ENCODE measurements at regions of chr2 and their contacts with region 1.

Region 1: DNA sequence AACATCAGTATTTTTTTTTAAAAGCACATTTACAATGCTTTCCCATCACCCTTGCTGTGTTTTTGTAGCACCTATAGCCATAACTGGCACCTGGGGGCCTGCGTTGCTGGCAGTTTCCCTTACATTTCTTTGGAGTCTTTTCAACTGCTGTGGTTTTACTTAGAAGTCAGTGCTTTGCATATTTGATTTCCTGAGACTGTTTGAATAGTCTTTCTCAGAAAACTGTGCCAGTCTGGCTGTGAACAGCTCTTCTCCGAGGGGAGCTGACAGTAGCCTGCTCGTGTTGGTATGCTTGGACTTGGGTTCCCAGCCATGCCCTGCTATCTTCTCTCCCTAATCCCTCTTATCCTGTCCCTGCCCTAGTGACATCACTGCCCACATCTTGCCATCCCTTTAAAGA is 81.5 kb downstream of the DPP4 start:
- DNase-seq: peak; percentile 79
- H3K4me3 Mint-ChIP-seq: peak overlapping the region; percentile 78
- H3K27ac Mint-ChIP-seq: peak overlapping the region; percentile 96
- H3K4me1 Mint-ChIP-seq: peaks cover 77% of the 10 kb centered on the region
- H3K27me3 Mint-ChIP-seq: no peaks in the 10 kb centered on the region

Region 2: GRCh38 chr2:161592713-161593112 is 399.8 kb before region 1 on chr2:
- CTCF ChIA-PET with region 1: no interaction called
- POLR2A ChIA-PET with region 1: no interaction called
- DNase-seq: no peak
- H3K4me3 Mint-ChIP-seq: no peak overlapping the region
- H3K27ac Mint-ChIP-seq: no peak overlapping the region
- H3K4me1 Mint-ChIP-seq: peaks cover 19% of the 10 kb centered on the region
- H3K27me3 Mint-ChIP-seq: peaks cover 58% of the 10 kb centered on the region

Region 3: DNA sequence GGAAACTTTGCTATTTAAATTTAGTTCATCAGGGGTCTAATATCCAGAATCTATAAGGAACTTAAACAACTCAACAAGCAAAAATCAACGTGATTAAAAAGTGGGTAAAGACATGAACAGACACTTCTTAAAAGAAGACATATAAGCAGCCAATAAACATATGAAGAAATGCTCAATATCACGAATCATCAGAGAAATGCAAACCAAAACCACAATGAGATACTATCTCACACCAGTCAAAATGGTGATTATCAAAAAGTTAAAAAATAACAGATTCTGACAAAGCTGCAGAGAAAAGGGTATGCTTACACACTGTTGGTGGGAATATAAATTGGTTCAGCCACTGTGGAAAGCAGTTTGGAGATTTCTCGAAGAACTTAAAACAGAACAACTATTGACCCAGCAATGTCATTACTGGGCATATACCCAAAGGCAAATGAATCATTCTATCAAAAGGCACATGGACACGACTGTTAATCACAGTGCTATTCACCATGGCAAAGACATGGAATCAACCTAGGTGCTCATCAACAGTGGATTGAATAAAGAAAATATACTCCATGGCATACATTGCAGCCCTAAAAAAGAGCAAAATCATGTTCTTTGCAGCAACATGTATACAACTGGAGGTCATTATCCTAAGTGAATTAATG is 178.4 kb before region 1 on chr2:
- CTCF ChIA-PET with region 1: no interaction called
- POLR2A ChIA-PET with region 1: no interaction called
- DNase-seq: no peak
- H3K4me3 Mint-ChIP-seq: no peak overlapping the region
- H3K27ac Mint-ChIP-seq: no peak overlapping the region
- H3K4me1 Mint-ChIP-seq: no peaks in the 10 kb centered on the region
- H3K27me3 Mint-ChIP-seq: peaks cover 9% of the 10 kb centered on the region

Region 4: GRCh38 chr2:161954103-161954502 is 38.4 kb before region 1 on chr2:
- CTCF ChIA-PET with region 1: interaction called, 3 read pairs
- POLR2A ChIA-PET with region 1: interaction called, 21 read pairs
- DNase-seq: peak; percentile 50
- H3K4me3 Mint-ChIP-seq: no peak overlapping the region
- H3K27ac Mint-ChIP-seq: peak overlapping the region; percentile 92
- H3K4me1 Mint-ChIP-seq: peaks cover 63% of the 10 kb centered on the region
- H3K27me3 Mint-ChIP-seq: no peaks in the 10 kb centered on the region

Region 5: GRCh38 chr2:161981679-161982250 is 10.8 kb before region 1 on chr2:
- CTCF ChIA-PET with region 1: interaction called, 28 read pairs
- POLR2A ChIA-PET with region 1: no interaction called
- DNase-seq: no peak
- H3K4me3 Mint-ChIP-seq: no peak overlapping the region
- H3K27ac Mint-ChIP-seq: no peak overlapping the region
- H3K4me1 Mint-ChIP-seq: peaks cover 55% of the 10 kb centered on the region
- H3K27me3 Mint-ChIP-seq: no peaks in the 10 kb centered on the region

Region 6: DNA sequence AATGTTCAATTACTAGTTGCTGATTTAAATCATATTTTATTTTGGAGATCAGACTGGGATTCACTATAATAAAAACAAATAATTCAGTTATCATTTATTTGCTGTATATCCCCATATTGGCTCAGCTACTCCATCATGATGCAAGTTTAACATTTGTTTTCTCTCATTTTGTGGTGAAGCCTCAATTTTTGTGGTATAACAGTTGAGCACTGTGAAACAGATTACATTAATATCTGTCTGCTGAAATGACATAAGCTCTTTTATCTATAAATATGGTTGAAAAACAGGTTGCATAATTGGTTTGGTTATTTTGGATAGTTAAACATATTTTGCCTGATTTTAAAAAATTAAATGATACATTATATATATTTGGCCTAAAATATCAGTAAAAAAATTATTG is 13.8 kb after region 1 on chr2:
- CTCF ChIA-PET with region 1: interaction called, 5 read pairs
- POLR2A ChIA-PET with region 1: interaction called, 13 read pairs
- DNase-seq: no peak
- H3K4me3 Mint-ChIP-seq: no peak overlapping the region
- H3K27ac Mint-ChIP-seq: peak overlapping the region; percentile 58
- H3K4me1 Mint-ChIP-seq: peaks cover 72% of the 10 kb centered on the region
- H3K27me3 Mint-ChIP-seq: no peaks in the 10 kb centered on the region

Region 7: GRCh38 chr2:162029287-162029901 is 36.9 kb after region 1 on chr2:
- CTCF ChIA-PET with region 1: no interaction called
- POLR2A ChIA-PET with region 1: no interaction called
- DNase-seq: no peak
- H3K4me3 Mint-ChIP-seq: no peak overlapping the region
- H3K27ac Mint-ChIP-seq: no peak overlapping the region
- H3K4me1 Mint-ChIP-seq: peaks cover 43% of the 10 kb centered on the region
- H3K27me3 Mint-ChIP-seq: no peaks in the 10 kb centered on the region

Region 8: DNA sequence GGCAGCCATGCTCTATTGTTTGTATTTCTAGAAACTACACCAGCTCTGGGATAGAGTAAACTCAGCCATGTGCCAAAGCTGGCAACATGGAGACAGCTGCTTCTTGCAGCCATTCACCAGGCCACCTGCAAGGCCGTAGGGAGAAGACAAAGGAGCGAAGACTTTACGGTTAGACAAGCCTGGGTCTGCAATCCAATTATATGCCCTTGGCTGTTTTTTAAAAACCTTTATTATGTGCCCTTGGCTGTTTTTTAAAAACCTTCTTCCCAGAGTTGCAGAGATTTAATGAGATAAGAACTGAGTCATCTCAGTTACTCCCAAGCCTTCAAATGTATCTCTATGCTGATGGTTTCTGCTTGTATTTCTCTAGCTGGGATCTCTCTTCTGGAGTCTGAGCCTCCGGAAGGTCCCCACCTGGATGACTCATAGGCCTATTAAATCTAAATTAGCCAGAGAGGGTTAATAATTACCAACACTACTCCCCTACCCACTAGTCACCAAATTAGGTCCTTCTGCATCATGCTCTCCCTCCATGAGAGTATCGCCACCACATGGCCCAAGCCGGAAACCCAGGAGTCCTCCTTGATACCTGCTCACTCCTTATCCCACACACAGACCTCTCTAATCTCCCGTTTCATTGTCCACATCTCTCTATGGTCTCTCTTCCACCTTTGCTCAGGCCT is 98.9 kb after region 1 on chr2:
- CTCF ChIA-PET with region 1: no interaction called
- POLR2A ChIA-PET with region 1: no interaction called
- DNase-seq: no peak
- H3K4me3 Mint-ChIP-seq: no peak overlapping the region
- H3K27ac Mint-ChIP-seq: no peak overlapping the region
- H3K4me1 Mint-ChIP-seq: peaks cover 13% of the 10 kb centered on the region
- H3K27me3 Mint-ChIP-seq: no peaks in the 10 kb centered on the region

Measured in activated CD4-positive, alpha-beta T cell treated with anti-CD3 and anti-CD28 coated beads, Interleukin-2, amount 10 ng/mL, durations not matched to agents 7 days and 5 days (primary cell).